ENCODE measurements at regions of chr1 and their contacts with region 1.

Region 1: DNA sequence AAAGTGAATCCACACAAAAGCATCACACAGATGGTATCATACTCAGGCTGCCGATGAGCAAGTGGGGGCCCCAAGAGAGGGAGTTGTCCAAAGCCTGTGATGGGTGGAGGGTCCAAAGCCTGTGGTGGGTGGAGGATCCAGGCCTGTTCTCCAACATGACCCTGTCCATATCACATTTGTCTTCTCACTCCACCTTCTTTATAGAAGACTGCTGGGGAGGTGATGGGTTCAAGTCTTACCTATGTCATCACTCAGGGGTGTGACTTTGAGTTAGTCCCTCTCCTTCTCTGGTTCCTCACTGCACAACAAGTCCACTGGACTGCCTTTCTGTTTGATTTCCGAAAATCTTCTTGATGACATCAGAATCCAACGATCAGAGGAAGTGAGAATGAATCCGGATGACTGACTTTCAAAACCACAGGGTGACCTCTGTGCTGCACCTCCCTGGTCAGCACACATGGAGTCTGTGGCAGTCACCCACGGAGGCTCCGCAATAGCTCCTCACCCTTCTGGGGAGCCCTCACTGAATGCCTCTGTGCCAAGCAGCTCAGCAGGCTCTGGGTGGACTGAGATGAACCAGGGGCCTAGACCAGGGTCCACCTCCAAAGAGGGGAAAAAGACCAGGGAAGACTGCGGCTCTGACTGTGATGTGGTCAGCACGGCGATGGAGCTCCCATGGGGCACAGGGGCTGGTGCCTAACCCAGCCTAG is 166.8 kb downstream of the HIVEP3 start:
- DNase-seq: peak; percentile 72
- ATAC-seq: peak; percentile 24
- H3K4me3 ChIP-seq: peak overlapping the region in 1 of 5 experiments; percentile 40
- H3K4me3 Mint-ChIP-seq: peak overlapping the region; percentile 70
- H3K27ac ChIP-seq: peak overlapping the region; percentile 72 to 81
- H3K27ac Mint-ChIP-seq: peak overlapping the region; percentile 95
- H3K4me1 ChIP-seq: peaks cover 48 to 64% of the 10 kb centered on the region in 2 donors
- H3K4me1 Mint-ChIP-seq: peaks cover 60% of the 10 kb centered on the region
- H3K27me3 ChIP-seq: no peaks in the 10 kb centered on the region
- H3K27me3 Mint-ChIP-seq: no peaks in the 10 kb centered on the region
- CTCF ChIP-seq: no peak

Region 2: DNA sequence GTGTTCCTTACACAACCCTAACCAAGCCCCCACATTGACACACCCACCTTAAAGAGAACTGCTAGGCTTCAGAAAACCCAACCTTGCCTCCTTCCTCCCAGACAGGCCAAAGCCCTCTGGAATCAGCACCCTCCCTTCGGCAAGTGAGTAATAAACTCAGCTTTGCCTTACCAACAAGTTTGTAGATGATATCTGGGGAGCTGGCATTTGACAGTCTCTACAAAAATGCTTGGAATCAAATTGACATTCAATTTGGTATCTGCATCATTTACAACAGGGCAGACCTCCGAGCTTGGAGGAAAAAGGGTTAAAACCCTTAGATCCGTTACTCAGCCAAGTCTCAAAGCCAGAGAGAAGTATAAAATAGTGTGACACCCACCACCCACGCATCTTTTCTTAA is 118.2 kb before region 1 on chr1:
- CTCF ChIA-PET with region 1: no interaction called
- POLR2A ChIA-PET with region 1: interaction called, 10 read pairs
- intact Hi-C with region 1: no loop called
- DNase-seq: no peak
- ATAC-seq: no peak
- H3K4me3 ChIP-seq: no peak overlapping the region
- H3K4me3 Mint-ChIP-seq: no peak overlapping the region
- H3K27ac ChIP-seq: no peak overlapping the region
- H3K27ac Mint-ChIP-seq: no peak overlapping the region
- H3K4me1 ChIP-seq: peaks cover 17 to 23% of the 10 kb centered on the region in 2 donors
- H3K4me1 Mint-ChIP-seq: peaks cover 45% of the 10 kb centered on the region
- H3K27me3 ChIP-seq: no peaks in the 10 kb centered on the region
- H3K27me3 Mint-ChIP-seq: no peaks in the 10 kb centered on the region
- CTCF ChIP-seq: no peak

Region 3: DNA sequence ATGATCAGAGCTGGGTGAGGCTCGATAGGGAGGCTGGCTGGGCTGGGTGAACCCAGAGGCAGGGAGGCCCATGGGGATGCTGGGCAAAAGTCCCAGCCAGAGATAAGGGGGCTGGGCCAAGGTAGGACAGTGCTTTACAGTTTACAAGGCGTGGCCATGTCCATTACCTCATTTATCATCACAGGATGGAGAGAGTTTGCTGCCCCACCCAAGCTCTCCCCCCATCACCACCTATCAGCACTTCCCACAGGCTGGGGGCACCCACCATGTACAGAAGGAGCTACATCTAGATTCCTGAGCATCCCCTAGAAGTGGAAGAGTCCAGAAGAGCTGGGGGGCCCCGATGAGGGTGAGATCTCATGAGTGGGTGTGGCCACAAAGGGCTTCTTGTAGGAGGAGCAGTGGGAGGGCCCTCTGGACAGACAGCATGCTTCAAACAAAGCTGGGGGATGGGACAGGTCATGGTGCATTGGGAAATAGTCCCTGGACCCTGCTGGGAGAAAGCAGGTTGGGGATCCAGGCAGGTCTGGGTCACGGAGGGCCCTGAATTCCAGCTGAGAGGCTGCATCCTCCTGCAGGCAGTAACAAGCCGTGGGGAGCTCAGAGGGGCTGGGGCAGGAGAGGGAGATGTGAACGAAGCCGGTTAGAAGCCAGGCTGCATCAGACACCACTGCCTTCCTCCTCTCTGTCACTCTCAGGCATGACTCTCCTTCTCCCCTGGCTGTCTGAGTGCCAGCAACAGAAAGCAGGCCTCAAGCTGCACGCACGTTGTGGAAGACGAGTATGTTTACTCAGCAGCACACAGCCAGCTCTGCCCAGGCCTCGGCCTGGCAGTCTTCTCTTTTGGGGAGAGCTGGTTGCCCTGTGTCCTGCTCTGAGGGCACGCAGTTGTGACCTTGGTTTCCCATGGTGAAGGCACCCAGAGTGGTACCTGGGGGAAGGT is 35.5 kb before region 1 on chr1:
- CTCF ChIA-PET with region 1: no interaction called
- POLR2A ChIA-PET with region 1: no interaction called
- intact Hi-C with region 1: no loop called
- DNase-seq: no peak
- ATAC-seq: no peak
- H3K4me3 ChIP-seq: no peak overlapping the region
- H3K4me3 Mint-ChIP-seq: no peak overlapping the region
- H3K27ac ChIP-seq: no peak overlapping the region
- H3K27ac Mint-ChIP-seq: no peak overlapping the region
- H3K4me1 ChIP-seq: peaks cover 17 to 29% of the 10 kb centered on the region in 2 donors
- H3K4me1 Mint-ChIP-seq: peaks cover 32% of the 10 kb centered on the region
- H3K27me3 ChIP-seq: no peaks in the 10 kb centered on the region
- H3K27me3 Mint-ChIP-seq: no peaks in the 10 kb centered on the region
- CTCF ChIP-seq: no peak

Region 4: DNA sequence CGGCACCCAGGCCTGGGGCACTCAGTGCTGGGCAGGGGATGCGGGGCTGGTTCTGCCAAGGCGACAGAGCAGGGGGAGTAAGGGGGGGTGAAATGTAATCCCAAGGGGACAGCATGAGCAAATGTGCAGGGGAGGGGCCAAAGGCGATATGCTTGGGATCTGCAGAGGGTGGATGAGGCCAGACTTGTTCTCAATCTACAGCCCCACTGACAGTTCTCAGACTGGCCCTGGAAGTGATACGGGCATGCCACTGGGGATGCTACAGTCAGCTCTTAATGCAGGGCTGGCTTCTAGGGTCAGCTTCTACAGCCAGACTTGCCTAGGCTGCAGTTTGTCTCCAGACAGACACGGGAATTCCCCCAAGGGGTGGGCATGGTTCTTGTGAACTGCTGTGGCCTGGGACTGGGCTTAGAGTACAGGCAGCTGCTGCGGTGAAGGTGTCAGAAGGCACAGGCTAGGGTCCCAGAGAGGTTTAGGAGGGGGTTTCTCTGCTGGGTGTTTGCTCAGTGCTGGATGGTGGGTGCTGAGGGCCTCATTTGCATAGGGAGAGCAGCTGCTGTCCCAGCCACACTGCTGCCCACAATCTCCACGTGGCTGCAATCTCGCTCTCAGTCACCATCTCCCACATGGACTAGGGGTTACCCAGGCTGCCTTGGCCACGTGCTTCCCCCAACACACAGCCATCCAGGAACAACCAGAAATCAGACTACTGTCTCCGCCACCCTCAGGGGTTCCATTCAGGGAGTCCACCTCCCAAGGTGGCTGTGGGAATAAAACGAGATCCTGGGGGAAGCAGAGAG is 23.4 kb before region 1 on chr1:
- CTCF ChIA-PET with region 1: interaction called, 7 read pairs
- POLR2A ChIA-PET with region 1: interaction called, 12 read pairs
- intact Hi-C with region 1: loop called (anchors 1 kb)
- DNase-seq: peak; percentile 92
- ATAC-seq: peak; percentile 79
- H3K4me3 ChIP-seq: peak overlapping the region in 1 of 5 experiments; percentile 58
- H3K4me3 Mint-ChIP-seq: peak overlapping the region; percentile 81
- H3K27ac ChIP-seq: peak overlapping the region; percentile 86 to 94
- H3K27ac Mint-ChIP-seq: peak overlapping the region; percentile 84
- H3K4me1 ChIP-seq: peaks cover 43 to 71% of the 10 kb centered on the region in 2 donors
- H3K4me1 Mint-ChIP-seq: peaks cover 67% of the 10 kb centered on the region
- H3K27me3 ChIP-seq: no peaks in the 10 kb centered on the region
- H3K27me3 Mint-ChIP-seq: no peaks in the 10 kb centered on the region
- CTCF ChIP-seq: no peak

Region 5: DNA sequence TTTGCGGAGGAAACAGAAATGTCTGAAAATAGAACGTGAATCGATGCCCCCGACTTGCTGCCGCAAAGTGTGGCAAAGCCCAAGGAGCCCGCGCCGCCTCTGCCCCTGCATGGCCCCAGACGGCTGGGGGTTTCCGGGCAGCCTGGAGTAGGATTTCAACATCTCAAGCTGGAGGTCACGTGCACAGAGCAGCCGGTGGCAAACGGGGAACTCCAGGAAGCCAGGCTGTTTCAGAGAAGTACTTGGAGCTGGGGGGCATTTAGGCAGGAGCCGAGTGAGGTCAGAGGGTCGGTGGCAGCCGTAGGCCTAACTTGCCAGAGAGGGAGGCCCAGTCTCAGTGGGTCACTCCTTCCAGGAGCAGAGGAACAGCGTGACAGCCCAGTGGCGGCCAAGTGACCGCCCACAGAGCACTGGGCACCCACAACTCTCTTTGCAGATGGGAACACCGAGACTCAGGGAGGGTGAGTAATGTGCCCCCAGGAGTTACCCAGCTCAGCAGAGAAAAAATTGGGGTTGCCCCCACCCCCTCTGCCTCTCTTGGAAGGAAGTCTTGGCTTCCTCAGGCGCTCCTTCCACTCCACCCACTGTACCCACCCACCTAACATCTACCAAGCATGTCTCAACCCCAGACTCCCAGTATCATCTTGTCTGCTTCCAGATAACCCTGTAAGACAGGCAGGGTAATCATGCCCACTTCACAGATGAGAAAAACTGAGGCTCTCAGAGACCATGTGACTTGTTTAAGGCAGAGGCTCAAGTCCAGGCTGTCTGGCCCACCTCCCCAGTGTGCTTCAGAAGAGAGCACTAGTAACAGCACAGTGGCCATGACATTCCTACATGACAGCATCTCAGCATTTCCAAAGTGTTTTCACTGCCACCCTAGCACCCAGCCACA is 12.7 kb before region 1 on chr1:
- CTCF ChIA-PET with region 1: no interaction called
- POLR2A ChIA-PET with region 1: interaction called, 3 read pairs
- intact Hi-C with region 1: loop called (anchors 1 kb)
- DNase-seq: peak; percentile 91
- ATAC-seq: peak; percentile 83
- H3K4me3 ChIP-seq: peak overlapping the region; percentile 4 to 47 (median 27)
- H3K4me3 Mint-ChIP-seq: peak overlapping the region; percentile 85
- H3K27ac ChIP-seq: peak overlapping the region; percentile 28 to 64
- H3K27ac Mint-ChIP-seq: peak overlapping the region; percentile 85
- H3K4me1 ChIP-seq: peaks cover 41 to 49% of the 10 kb centered on the region in 2 donors
- H3K4me1 Mint-ChIP-seq: peaks cover 81% of the 10 kb centered on the region
- H3K27me3 ChIP-seq: no peaks in the 10 kb centered on the region
- H3K27me3 Mint-ChIP-seq: no peaks in the 10 kb centered on the region
- CTCF ChIP-seq: no peak

Region 6: GRCh38 chr1:41802532-41803501 is 50.9 kb after region 1 on chr1:
- CTCF ChIA-PET with region 1: interaction called, 3 read pairs
- POLR2A ChIA-PET with region 1: no interaction called
- intact Hi-C with region 1: loop called (anchors 5 kb)
- DNase-seq: peak; percentile 63
- ATAC-seq: peak; percentile 79
- H3K4me3 ChIP-seq: peak overlapping the region in 1 of 5 experiments; percentile 16
- H3K4me3 Mint-ChIP-seq: peak overlapping the region; percentile 71
- H3K27ac ChIP-seq: peak overlapping the region; percentile 56 to 70
- H3K27ac Mint-ChIP-seq: peak overlapping the region; percentile 84
- H3K4me1 ChIP-seq: peaks cover 69 to 82% of the 10 kb centered on the region in 2 donors
- H3K4me1 Mint-ChIP-seq: peaks cover 74% of the 10 kb centered on the region
- H3K27me3 ChIP-seq: no peaks in the 10 kb centered on the region
- H3K27me3 Mint-ChIP-seq: no peaks in the 10 kb centered on the region
- CTCF ChIP-seq: no peak

Region 7: GRCh38 chr1:41868599-41868998 is 116.6 kb after region 1 on chr1:
- CTCF ChIA-PET with region 1: no interaction called
- POLR2A ChIA-PET with region 1: no interaction called
- intact Hi-C with region 1: loop called (anchors 1 kb)
- DNase-seq: peak; percentile 71
- ATAC-seq: peak; percentile 80
- H3K4me3 ChIP-seq: peak overlapping the region in 1 of 5 experiments; percentile 32
- H3K4me3 Mint-ChIP-seq: peak overlapping the region; percentile 29
- H3K27ac ChIP-seq: no peak overlapping the region
- H3K27ac Mint-ChIP-seq: no peak overlapping the region
- H3K4me1 ChIP-seq: peaks cover 7 to 10% of the 10 kb centered on the region in 2 donors
- H3K4me1 Mint-ChIP-seq: peaks cover 17% of the 10 kb centered on the region
- H3K27me3 ChIP-seq: no peaks in the 10 kb centered on the region
- H3K27me3 Mint-ChIP-seq: no peaks in the 10 kb centered on the region
- CTCF ChIP-seq: peak; percentile 42

Region 8: GRCh38 chr1:42035830-42036604 is 284.1 kb after region 1 on chr1:
- CTCF ChIA-PET with region 1: no interaction called
- POLR2A ChIA-PET with region 1: no interaction called
- intact Hi-C with region 1: loop called (anchors 10 kb)
- DNase-seq: peak; percentile 95
- ATAC-seq: peak; percentile 94
- H3K4me3 ChIP-seq: peak overlapping the region; percentile 13 to 93 (median 83)
- H3K4me3 Mint-ChIP-seq: peak overlapping the region; percentile 72
- H3K27ac ChIP-seq: peak overlapping the region in 1 of 2 donors; percentile 34
- H3K27ac Mint-ChIP-seq: peak overlapping the region; percentile 67
- H3K4me1 ChIP-seq: peaks cover 13 to 15% of the 10 kb centered on the region in 2 donors
- H3K4me1 Mint-ChIP-seq: peaks cover 12% of the 10 kb centered on the region
- H3K27me3 ChIP-seq: peaks cover 0 to 6% (median 0%) of the 10 kb centered on the region in 4 experiments
- H3K27me3 Mint-ChIP-seq: peaks cover 13% of the 10 kb centered on the region
- CTCF ChIP-seq: no peak